Sigmoid colon (tissue), 7 donors: ENCODE measurements at regions of chr4 and their contacts with region 1.

Region 1: GRCh38 chr4:151099229-151099975 is at the start of gene RPS3A:
- DNase-seq: peak; percentile 98
- H3K4me3 ChIP-seq: peak within 1 kb of the TSS; percentile 67 to 76 (median 70)
- H3K27ac ChIP-seq: peak within 1 kb of the TSS; percentile 85 to 91 (median 88)
- H3K4me1 ChIP-seq: peaks cover 0 to 33% (median 23%) of the 10 kb centered on the region in 4 donors
- H3K27me3 ChIP-seq: no peaks in the 10 kb centered on the region
- CTCF ChIP-seq: peak; percentile 34 to 71 (median 40)
- EP300 ChIP-seq: peak in 1 of 4 donors; percentile 46
- POLR2A ChIP-seq: peak; percentile 54 to 78
- total RNA-seq, gene RPS3A: 4,012 to 6,800 (median 5,576) TPM

Region 2: DNA sequence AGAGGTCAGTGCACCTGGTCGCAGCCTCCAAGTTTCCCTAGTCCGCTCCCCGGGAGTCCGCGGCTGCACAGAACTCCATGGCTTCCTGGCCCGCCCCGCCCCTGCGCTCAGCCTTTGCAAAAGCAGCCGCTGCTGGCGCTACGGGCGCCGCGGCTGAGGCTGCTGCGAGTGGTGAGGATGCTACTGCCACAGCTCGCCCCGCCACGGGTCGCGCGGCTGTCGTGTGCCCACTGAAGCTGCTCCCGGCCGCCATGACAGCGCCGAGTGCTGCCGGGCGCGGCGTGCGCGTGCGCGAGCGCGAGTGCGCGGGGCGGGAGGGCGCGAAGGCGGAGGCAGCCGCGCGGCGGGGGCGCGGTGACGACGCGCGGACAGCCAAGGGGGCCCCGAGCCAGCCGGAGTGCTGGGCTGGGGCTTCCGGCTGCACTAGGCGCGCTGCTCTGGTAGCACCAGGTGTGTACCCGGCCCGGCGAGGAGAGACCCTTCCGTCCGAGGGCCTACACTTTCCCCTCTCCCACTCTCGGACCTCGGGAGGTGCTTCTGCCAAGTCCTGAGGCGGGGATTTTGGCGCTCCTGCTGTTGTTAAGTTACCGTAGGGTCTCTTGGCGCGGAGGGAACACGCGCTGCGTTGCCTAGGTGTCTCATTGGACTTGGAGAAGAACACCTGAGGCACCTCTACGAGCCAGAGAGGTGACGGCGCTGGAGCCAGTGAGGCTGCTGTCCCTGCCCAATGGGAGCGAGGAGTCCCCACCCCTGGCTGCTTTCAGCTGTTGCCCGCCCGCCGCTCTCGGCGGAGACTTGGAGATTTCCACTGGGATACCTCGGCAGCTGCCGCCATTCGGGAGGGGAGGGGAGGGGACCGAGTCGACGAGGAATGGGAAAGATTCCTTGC is 83.7 kb before region 1 on chr4:
- intact Hi-C with region 1: loop called (anchors 2 kb)
- DNase-seq: peak; percentile 83
- H3K4me3 ChIP-seq: peak overlapping the region; percentile 90 to 99 (median 96)
- H3K27ac ChIP-seq: peak overlapping the region; percentile 86 to 91 (median 89)
- H3K4me1 ChIP-seq: peaks cover 0 to 19% (median 9%) of the 10 kb centered on the region in 4 donors
- H3K27me3 ChIP-seq: no peaks in the 10 kb centered on the region
- CTCF ChIP-seq: no peak
- EP300 ChIP-seq: no peak
- POLR2A ChIP-seq: peak; percentile 13 to 35

Region 3: DNA sequence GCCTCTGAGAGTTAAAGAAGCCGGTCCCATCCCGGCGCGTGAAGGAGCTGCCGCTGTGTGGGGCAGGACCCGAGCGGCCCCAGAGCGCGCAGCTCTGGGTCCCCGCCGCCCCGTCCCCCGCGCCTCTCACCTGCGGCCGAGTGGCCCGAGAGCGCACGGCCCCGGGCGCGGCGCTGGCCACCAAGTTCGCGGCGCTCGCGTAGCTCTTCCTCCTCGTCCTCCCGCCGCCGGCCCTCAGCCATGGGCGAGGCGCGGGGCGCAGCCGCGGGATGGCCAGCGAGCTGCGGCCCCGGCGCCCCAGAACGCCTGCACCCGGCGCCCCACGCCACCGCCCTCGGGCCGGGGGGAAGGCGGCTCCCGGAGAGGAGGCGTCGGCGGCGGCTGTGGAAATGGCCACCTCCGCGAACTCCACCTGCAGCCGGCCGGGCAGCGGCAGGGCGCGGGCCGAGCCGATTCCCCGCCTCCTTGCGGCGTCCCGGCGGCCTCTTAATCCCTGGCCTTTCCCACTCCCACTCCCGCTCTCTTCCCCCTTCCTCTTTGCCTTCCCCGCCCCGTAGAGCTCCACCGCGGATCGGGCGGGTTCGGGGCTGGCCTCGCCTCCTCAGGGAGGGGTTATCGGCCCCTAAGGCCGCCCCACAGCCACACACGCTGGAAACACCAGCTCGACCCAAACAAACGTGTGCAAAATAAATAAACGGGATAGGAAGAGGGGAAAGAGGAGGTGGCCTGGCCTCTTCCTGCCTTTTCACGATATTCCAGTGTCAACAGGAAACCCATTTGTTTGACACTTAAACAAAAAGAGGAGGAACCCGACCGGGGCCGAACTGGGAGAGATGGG is 225.9 kb after region 1 on chr4 and contains the start of gene SH3D19:
- intact Hi-C with region 1: loop called (anchors 5 kb)
- DNase-seq: peak; percentile 89
- H3K4me3 ChIP-seq: peak within 1 kb of the TSS; percentile 52 to 80 (median 68)
- H3K27ac ChIP-seq: peak within 1 kb of the TSS; percentile 89 to 95 (median 92)
- H3K4me1 ChIP-seq: peaks cover 0 to 42% (median 33%) of the 10 kb centered on the region in 4 donors
- H3K27me3 ChIP-seq: no peaks in the 10 kb centered on the region
- CTCF ChIP-seq: no peak
- EP300 ChIP-seq: no peak
- POLR2A ChIP-seq: peak; percentile 35 to 68
- total RNA-seq, gene SH3D19: 105 to 195 (median 128) TPM

Region 4: GRCh38 chr4:152014280-152014679 is 914.9 kb after region 1 on chr4:
- intact Hi-C with region 1: no loop called
- DNase-seq: no peak
- H3K4me3 ChIP-seq: no peak overlapping the region
- H3K27ac ChIP-seq: no peak overlapping the region
- H3K4me1 ChIP-seq: peaks cover 0 to 14% (median 10%) of the 10 kb centered on the region in 4 donors
- H3K27me3 ChIP-seq: no peaks in the 10 kb centered on the region
- CTCF ChIP-seq: no peak
- EP300 ChIP-seq: no peak
- POLR2A ChIP-seq: no peak